Mucosa of descending colon (tissue), 3 donors: ENCODE measurements at regions of chr20 and their contacts with region 1.

Region 1: DNA sequence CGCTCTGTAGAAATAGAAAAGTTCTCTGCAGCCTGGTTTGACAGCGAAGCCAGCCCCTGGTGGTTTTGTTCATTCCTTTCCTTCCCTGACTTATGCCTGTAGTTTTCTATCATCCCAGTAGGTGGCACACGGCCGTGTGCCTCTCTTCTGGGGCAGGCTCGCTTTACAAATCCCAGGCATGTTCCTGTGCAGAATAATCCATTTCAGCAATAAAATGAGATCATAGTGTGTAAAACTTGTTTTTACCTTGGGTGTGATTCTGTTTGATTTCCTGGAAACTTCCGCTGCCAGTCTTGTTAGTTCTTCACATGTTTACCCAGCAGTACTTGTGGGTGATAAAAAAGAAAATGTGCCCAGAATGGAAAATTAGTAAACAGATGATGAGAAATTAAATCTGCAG is 7.4 kb upstream of the INSM1 start:
- DNase-seq: peak in 2 of 3 donors; percentile 47 to 76
- ATAC-seq: peak; percentile 97
- H3K4me3 ChIP-seq: no peak overlapping the region
- H3K4me1 ChIP-seq: peaks cover 18% of the 10 kb centered on the region
- CTCF ChIP-seq: peak; percentile 56

Region 2: DNA sequence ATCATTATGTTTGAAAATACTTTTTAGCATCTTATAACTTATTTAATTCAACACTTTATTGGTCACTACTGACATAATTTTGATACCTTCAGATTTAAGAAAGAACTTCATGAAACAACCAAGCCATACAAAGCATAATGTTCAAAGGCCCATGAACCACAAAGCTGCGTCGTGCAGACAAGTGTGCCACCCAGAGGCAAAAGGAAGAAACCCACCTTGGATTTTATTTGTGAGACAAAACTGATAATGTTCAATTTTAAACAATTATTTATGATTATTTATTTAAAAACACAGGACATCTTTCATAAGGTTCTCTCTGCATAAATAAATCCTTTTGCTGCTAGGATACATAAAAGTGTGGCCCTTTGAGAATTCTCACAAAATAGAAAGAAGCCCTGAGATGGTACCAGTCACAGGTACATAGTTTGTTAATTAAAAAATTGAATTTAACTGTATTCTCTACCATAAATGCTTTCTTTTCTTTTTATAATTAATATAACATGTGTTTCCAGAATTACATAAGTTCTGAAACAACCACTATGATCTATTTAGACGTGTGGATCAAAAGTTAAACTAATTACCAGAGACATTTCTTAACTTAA is 208.2 kb after region 1 on chr20:
- intact Hi-C with region 1: loop called (anchors 5 to 10 kb)
- DNase-seq: peak in 1 of 3 donors; percentile 46
- ATAC-seq: peak; percentile 45
- H3K4me3 ChIP-seq: no peak overlapping the region
- H3K4me1 ChIP-seq: no peaks in the 10 kb centered on the region
- CTCF ChIP-seq: peak; percentile 35